GM10248 (cell line): ENCODE measurements at regions of chr6 and their contacts with region 1.

Region 1: GRCh38 chr6:34414999-34415858 is 10.6 kb downstream of the RPS10 start:
- DNase-seq: peak; percentile 55
- CTCF ChIP-seq: peak; percentile 55

Region 2: DNA sequence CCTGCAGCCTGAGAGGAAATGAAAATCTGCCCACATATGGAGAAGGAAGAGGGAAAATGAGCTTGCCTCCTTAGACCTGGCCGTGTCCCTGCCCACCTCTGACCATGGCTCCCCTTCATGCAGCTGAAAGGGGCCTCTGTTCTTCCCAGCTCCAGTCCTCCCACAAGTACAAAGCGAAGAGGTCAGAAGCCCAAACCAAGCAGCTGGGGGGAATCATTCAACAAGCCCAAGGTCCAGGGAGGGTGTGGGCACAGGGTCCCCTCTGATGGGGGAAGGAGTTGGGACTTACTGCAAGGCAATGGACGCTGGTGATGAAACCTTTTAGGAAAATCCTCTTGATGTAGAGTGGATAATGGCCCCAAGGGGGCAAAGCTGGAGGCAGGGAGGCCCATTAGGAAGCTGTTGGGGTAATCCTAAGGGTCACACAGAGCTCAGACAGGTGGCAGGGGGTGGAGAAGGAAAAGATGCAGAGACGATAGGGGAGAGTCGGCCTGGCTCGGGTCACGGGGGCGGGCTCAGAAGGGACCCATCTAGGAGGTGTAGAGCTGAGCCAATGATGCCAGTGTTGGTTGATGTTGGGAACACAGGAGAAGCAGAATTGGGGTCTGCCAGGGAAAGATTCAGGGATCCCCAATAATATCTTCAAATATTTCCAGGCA is 253.2 kb before region 1 on chr6:
- CTCF ChIA-PET with region 1: interaction called, 28 read pairs
- POLR2A ChIA-PET with region 1: no interaction called
- DNase-seq: no peak
- CTCF ChIP-seq: no peak

Region 3: GRCh38 chr6:34392497-34393190 is 22.6 kb before region 1 on chr6 and contains the start of gene NUDT3:
- CTCF ChIA-PET with region 1: interaction called, 16 read pairs
- POLR2A ChIA-PET with region 1: interaction called, 4 read pairs
- DNase-seq: peak; percentile 94
- CTCF ChIP-seq: peak; percentile 85

Region 4: DNA sequence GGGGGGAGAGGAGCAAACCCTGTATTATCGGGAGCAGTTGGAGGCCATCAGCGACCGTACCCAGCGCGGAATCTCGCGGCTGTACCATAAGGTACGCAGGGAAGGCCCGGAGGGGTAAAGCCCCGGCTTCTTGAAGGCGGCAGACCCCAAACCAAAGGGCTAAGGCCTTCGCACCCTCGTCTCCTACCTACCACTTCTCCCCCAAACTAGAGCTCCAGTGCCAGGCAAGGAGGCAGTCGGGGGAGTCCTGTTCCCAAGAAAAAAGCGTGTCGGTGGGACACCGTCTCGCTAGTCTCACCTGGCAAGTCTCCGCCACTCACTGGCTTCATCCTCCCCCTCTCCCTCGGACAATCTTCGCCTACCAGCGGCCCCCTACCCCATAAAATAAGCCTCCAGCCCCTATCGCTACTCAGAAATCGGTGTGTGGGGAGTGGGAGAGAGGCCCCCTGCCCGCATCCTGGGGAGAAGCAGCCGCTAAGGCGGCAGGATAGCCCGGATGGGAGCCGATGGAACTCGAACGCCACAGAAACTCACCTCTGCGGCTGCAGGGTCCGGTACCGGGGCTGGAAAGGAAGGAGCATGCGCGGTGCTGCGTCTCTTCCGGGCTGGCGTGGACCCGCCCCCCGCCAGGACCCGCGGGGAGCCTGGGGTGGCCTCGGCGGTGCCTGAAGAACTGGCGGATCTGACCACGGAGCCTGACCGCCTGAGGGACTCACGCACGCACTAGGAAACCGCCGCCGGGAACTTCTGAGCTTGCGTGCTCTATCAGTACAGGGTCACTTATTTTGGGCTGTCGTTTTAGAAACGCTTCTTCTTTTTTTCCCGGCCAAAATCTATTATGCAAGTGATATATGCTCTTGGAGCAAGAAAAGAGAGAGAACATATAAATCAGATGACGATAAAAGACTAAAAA is 10.5 kb after region 1 on chr6 and contains the start of gene RPS10:
- CTCF ChIA-PET with region 1: interaction called, 21 read pairs
- POLR2A ChIA-PET with region 1: interaction called, 6 read pairs
- DNase-seq: peak; percentile 99
- CTCF ChIP-seq: no peak